Activated CD4-positive, alpha-beta memory T cell treated with anti-CD3 and anti-CD28 coated beads, Interleukin-2, amount 10 ng/mL, durations not matched to agents 7 days and 5 days (primary cell): ENCODE measurements at regions of chr2 and their contacts with region 1.

Region 1: DNA sequence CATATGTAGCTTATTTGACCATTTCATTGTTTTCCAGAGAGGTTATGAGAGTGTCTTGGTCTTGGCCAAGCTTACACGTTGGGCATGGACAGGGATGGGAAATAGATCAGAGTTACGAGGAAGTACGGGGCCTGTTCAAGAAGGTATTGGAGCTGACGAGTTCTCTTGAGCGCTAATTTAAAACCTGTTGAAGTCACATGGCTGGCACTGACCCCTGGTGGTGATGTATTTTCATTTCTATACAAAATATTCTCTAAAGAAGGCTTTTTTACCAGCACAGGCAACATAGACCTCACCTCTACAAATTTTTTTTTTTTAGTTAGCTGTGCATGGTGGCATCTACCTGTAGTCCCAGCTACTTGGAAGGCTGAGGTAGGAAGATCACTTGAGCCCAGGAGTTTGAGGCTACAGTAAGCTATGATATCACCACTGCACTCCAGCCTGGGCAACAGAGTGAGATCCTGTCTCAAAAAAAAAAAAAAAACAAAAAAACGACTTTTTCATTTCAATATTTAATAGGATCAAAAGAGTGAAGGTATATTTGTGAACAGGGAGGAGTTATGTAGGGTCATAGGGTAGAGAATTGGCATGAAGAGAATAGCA is 19.6 kb downstream of the UGP2 start:
- DNase-seq: peak; percentile 55
- H3K4me3 Mint-ChIP-seq: no peak overlapping the region
- H3K27ac Mint-ChIP-seq: no peak overlapping the region
- H3K4me1 Mint-ChIP-seq: peaks cover 58% of the 10 kb centered on the region
- H3K27me3 Mint-ChIP-seq: no peaks in the 10 kb centered on the region

Region 2: DNA sequence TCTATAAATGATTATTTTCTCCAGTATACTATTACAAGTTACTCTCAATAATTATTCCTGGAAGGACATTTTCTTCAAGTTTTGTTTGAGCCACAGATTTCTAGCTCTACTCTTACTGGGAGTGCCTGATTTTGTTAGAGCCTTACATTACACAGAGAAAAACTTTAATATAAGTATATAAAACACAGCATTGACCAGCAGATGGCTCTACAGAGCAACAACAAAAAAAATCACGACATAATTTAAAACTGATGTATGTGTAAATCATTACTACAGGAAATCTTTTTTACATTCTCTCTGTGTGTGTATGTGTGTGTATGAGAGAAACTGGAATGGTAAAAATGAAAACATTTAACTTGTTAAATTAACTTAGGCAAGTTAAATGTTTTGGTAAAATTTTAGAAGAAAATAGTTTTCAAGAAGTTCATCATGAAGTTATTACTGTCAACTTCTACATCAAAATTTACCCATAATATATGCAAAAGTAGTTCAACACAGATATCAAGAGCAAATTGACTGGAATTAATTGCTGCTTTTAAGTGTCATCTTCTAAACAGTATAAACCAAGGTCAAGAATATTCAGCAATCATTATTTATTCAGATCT is 169.2 kb before region 1 on chr2:
- CTCF ChIA-PET with region 1: interaction called, 42 read pairs
- POLR2A ChIA-PET with region 1: interaction called, 8 read pairs
- DNase-seq: no peak
- H3K4me3 Mint-ChIP-seq: no peak overlapping the region
- H3K27ac Mint-ChIP-seq: no peak overlapping the region
- H3K4me1 Mint-ChIP-seq: no peaks in the 10 kb centered on the region
- H3K27me3 Mint-ChIP-seq: no peaks in the 10 kb centered on the region

Region 3: DNA sequence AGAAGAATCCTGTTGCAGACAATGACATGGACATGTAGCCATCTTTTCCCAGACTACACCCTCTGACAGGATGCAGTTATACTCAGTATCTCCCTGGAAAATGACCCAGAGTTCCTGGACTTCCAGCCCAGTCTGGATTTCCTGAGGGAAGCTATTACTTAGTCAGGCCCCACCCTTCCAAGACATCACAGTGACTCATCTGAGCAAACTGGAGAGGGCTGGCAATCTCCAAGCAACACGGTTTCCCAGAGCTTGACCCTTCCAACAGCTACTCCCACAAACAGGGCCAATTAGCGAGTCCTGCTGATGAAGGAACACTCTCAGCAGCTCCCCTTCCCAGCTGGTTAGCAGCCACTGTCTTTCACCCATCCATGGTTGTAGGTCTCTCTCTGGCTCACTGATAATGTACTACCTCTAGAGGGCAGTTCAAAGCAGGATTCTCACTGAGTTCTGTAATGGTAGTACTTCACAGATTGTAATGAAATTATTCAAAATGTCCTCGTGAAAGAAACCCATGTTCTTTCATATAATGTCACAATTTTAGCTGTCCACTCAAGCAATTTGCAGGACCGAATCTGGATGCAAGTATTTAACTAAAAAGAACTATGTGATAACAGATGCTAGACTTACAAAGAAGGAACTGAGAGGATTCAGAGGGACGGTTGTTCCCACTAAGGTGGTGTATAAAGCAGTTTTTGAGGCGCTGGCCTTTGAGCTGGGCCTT is 162.3 kb before region 1 on chr2:
- CTCF ChIA-PET with region 1: interaction called, 89 read pairs
- POLR2A ChIA-PET with region 1: interaction called, 3 read pairs
- DNase-seq: peak; percentile 18
- H3K4me3 Mint-ChIP-seq: no peak overlapping the region
- H3K27ac Mint-ChIP-seq: no peak overlapping the region
- H3K4me1 Mint-ChIP-seq: no peaks in the 10 kb centered on the region
- H3K27me3 Mint-ChIP-seq: no peaks in the 10 kb centered on the region

Region 4: DNA sequence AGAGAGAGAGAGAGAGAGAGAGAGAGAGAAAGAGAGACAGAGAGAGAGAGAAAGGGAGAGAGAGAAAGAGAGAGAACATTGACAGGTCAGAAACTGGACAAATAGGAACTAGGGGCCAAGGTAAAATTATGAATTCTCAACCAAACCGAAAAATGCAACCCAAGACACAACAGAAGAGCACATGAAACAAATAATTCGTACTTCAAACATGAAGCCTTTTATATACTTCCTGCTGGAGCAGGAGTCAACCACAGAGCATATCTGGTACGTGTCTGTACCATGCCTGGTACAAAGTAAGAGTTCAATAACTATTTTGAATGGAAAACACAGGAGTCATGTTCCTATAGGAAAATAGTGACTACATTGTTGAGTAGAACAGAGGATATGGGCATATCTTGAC is 164.4 kb after region 1 on chr2:
- CTCF ChIA-PET with region 1: no interaction called
- POLR2A ChIA-PET with region 1: no interaction called
- DNase-seq: no peak
- H3K4me3 Mint-ChIP-seq: no peak overlapping the region
- H3K27ac Mint-ChIP-seq: no peak overlapping the region
- H3K4me1 Mint-ChIP-seq: peaks cover 27% of the 10 kb centered on the region
- H3K27me3 Mint-ChIP-seq: no peaks in the 10 kb centered on the region